ENCODE measurements at regions of chr6 and their contacts with region 1.

Region 1: GRCh38 chr6:165987483-165988301 is 180.0 kb downstream of the TBXT start:
- DNase-seq: peak; percentile 92

Region 2: DNA sequence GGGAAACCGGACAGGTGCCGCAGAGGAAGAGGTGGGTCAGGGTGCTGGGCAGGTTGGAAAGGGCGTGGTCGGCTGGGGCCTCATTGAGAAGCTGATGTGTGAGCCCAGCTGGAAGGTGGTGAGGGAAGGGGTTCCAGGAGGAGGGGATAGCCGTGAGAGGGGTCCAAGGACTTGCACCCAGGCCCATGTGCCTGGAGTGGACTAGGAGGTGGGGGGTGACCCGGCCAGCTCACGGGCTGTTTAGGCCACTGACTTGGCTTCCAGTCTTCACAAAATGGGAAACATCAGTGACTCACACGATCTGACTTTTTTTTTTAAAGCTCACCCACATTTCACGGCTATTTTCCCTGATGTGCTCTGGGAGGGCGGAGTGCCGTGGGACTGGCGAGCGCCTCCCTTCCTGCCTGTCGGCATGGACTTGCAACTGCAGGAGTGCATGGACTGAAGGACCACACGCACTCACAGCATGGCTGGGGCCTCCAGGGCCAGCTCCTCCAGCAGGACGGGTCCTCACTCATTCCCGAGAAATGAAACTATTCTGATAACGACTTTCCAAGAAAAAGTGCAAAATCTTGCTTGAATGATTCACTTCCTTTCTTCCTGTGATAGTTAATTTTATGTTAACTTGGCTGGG is 311.1 kb before region 1 on chr6:
- intact Hi-C with region 1: no loop called
- DNase-seq: no peak

Region 3: GRCh38 chr6:165861226-165861625 is 126.5 kb before region 1 on chr6:
- intact Hi-C with region 1: no loop called
- DNase-seq: no peak

Region 4: DNA sequence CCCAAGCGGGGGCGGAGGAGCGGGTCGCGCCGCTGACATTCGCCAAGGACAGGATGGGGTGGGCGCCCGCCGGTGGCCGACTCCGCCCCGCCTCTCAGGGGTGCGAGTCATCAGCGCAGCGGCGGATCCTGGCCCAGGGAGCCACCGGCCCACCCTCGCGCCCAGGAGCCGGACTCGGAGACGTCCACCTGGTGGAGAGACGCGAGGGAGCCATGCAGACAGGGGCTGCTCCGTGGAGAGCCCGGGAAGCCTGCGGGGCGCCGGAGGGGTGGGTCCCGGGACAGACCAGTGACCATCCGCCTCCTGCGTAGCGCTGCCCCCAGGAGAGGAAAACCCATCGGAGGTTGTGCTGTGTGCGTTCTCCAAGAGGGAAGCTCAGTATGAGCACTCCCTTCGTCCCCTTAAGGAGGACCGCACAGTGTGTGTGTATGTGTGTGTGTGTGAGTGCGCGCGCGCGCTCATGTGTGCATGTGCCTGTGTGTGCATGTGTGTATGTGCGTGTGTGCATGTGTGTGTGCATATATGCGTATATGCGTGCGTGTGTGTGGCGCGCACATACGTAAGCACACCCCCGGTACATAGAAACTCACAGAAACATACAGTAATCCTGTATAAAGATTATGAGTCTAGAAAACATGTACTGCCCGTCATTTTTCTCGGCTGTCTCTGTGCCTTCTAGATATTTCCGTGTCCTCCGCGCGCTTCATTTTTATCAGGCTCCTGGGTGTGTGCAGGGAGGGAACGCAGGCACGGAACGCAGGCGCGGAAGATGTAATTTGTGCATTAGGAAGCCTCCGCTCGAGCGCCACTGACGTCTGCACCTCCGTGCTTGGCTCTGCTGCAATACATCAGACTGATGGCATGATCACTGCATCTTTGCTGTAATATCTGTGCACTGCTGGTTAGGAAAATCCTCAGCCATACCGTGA is 21.0 kb after region 1 on chr6:
- intact Hi-C with region 1: no loop called
- DNase-seq: no peak

Region 5: GRCh38 chr6:166026586-166027126 is 39.0 kb after region 1 on chr6:
- intact Hi-C with region 1: loop called in 1 of 2 experiments (anchors 1 kb)
- DNase-seq: peak; percentile 63

Region 6: DNA sequence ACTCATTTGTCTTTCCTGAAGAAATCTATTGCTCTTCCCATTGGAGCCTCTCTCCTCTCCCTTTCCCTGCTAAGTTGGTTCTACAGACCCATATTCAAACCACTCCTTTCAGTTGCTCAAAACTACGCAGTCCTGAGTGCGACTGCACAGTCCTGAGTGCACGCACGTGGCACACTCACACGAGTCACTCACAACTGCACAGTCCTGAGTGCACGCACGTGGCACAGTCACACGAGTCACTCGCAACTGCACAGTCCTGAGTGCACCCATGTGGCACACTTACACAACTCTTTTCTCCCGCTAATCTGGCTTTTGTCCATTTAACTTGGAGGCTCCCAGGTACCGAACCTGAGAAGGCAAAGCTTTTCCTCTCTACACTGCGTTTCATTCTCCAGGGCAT is 808.9 kb after region 1 on chr6:
- intact Hi-C with region 1: no loop called
- DNase-seq: no peak